Ascending aorta (tissue), 2 donors: ENCODE measurements at regions of chr9 and their contacts with region 1.

Region 1: GRCh38 chr9:121286973-121287741 is 19.2 kb downstream of the GSN start:
- DNase-seq: peak; percentile 56 to 95
- H3K4me3 ChIP-seq: peak overlapping the region; percentile 24 to 38
- H3K27ac ChIP-seq: peak overlapping the region; percentile 98 to 99
- H3K4me1 ChIP-seq: peaks cover 66 to 91% of the 10 kb centered on the region in 2 donors
- H3K27me3 ChIP-seq: no peaks in the 10 kb centered on the region
- CTCF ChIP-seq: peak in 2 of 3 experiments; percentile 28 to 29

Region 2: DNA sequence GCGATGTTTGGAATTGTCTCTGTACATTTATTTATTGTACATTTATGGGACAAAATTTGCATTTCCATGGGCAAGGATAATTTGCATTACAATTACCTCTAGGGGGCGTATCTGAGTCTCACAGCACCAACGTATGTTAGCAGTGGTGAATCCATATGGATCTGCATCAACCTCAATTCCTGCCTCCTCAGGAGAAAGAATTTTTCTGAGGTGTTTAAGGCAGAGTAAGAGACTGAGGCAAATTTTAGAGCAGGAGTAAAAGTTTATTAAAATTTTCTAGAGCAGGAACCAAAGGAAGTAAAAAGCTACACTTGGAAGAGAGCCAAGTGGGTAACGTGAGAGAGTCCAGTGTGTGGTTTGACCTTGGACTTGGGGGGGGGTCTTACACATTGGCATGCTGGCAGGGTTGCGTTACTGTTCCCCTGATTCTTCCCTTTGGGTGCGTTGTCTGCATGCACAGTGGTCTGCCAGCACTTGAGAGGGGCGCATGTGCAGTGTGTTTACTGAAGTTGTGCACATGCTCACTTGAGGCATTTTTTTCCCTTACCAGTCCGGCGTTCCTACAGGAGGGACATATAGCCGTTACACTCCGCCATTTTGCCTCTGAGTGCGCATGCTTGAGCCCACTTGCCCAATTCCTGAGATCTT is 64.5 kb before region 1 on chr9:
- intact Hi-C with region 1: no loop called
- DNase-seq: peak in 1 of 2 donors; percentile 34
- H3K4me3 ChIP-seq: no peak overlapping the region
- H3K27ac ChIP-seq: no peak overlapping the region
- H3K4me1 ChIP-seq: no peaks in the 10 kb centered on the region
- H3K27me3 ChIP-seq: no peaks in the 10 kb centered on the region
- CTCF ChIP-seq: peak; percentile 53 to 69 (median 66)

Region 3: DNA sequence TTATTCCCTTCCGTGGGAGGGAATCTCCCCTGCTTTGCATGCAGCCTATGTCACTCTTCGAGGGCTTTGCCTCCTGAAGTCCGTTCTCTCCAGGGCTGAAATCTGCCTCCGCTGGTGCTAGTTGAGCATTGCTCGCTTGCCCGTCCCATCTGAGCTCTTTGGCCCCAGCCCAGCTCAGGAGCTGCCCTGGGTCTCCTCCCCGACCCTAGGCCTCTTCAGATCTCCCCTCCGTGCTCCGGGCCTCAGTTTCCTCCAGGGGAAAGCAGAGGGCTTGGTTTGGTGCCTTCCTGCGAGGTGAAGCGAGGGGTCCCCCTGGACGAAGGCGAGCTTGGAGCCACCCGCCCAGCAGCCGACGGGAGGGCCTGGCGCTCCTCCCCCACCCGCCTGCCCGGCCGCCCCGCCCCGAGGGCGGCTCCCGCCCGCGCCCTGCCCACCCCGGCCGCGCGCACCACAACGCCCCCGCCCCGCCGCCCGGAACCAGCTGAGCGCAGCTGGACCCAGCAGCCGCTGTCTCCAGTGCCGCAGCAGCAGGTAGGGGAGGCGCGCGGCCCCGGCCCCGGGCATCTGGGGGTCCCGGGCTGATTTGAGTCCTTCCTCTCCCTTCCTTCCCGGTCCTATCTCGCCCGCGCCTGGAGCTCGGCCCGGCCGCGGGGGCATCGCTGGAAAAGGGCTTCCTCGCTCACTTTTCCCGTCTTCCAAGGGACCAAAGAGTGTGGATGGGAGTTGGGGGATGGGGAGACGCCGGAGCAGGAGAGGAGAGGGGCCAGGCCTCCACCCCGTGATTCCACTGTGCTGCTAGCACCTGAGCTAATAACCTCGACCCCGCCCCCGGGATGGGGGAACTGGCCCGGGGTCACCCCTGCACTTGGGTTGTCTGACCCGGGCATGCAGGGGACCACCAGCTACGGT is 19.2 kb before region 1 on chr9 and contains the start of gene GSN:
- intact Hi-C with region 1: loop called (anchors 2 kb)
- DNase-seq: peak in 1 of 2 donors; percentile 91
- H3K4me3 ChIP-seq: peak within 1 kb of the TSS; percentile 90 to 99
- H3K27ac ChIP-seq: peak within 1 kb of the TSS; percentile 98 to 99
- H3K4me1 ChIP-seq: peaks cover 23 to 36% of the 10 kb centered on the region in 2 donors
- H3K27me3 ChIP-seq: no peaks in the 10 kb centered on the region
- CTCF ChIP-seq: peak in 1 of 3 experiments; percentile 33
- total RNA-seq, gene GSN: 3,012 TPM

Region 4: GRCh38 chr9:121326130-121326838 is 39.1 kb after region 1 on chr9:
- intact Hi-C with region 1: loop called (anchors 2 kb)
- DNase-seq: peak; percentile 92 to 99
- H3K4me3 ChIP-seq: peak overlapping the region in 1 of 2 donors; percentile 34
- H3K27ac ChIP-seq: peak overlapping the region; percentile 98 to 99
- H3K4me1 ChIP-seq: peaks cover 26 to 75% of the 10 kb centered on the region in 2 donors
- H3K27me3 ChIP-seq: no peaks in the 10 kb centered on the region
- CTCF ChIP-seq: no peak